ENCODE measurements at regions of chr17 and their contacts with region 1.

Region 1: DNA sequence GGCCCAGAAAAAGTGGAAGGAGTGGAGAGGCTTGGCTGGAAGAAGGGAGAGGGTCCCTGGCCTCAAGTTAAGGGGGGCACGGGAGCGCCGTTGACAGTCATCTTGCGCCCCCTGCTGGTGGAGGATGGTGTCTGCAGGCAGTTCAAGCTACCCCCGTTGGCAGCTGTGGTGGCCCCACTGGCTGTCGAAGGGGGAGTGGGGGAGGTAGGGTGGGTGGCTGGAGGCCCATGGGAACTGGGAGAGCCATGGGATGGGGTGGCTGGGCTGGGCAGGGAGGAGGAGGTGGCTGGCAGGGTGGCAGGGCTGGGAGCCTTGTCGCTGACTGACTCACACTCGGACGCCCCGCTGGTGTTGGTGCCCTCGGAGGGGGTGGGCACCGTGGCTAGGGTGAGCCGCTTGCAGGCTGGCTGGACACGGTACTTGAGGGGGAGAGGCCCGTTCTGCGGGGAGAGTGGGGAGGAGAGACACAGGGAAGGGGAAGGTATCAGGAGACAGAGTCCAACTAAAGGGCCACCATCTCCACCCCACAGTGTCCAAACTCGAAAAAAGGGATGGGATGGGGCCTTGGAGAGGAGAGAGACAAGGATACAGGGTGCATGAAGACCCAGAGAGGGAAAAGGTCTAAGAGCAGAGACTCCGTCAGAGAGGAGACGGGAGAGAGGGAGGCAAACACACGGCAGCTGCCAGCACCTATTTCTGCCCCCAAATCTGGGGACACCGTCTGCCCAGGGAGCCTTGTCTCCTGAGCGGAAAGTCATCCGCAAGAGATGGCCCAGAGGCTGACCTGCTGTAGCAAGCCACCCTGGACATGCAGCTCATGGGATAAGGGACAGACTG is 5.2 kb downstream of the CISD3 start:
- DNase-seq: peak; percentile 93
- H3K4me3 Mint-ChIP-seq: no peak overlapping the region
- H3K27ac Mint-ChIP-seq: peak overlapping the region; percentile 15
- H3K4me1 Mint-ChIP-seq: peaks cover 44% of the 10 kb centered on the region
- H3K27me3 Mint-ChIP-seq: no peaks in the 10 kb centered on the region
- CTCF ChIP-seq: peak; percentile 100

Region 2: DNA sequence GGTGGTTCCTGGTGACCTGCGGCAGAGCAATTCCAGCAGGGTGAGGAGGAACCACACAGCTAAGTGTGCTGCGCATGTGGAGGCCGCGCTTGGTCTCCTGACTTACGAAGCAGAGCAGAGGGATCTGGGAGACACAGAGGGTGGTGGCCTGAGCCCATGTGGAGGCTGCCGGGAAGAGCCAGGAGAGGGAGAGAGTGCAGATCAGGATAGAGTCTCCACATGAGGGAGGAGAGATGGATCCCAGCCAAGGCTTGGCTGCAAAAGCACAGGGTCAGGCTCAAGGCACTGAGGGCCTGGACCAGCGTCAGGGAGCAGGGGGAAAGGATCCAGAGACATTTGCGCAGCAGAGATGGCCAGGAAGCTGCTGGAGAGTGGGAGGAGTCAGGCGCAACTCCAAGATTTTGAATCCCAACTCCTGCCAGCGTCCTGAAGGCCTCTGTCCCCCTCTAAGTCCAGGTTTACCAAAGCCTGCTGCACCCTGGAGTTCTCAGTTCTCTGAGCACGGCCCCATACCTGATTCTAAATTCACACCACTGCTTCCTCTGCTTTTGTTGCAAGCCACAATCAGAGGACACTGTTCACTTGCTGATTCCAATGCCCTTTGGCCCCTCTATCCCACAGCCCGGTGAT is 41.6 kb before region 1 on chr17:
- CTCF ChIA-PET with region 1: interaction called, 11 read pairs
- intact Hi-C with region 1: no loop called
- DNase-seq: no peak
- H3K4me3 Mint-ChIP-seq: no peak overlapping the region
- H3K27ac Mint-ChIP-seq: no peak overlapping the region
- H3K4me1 Mint-ChIP-seq: peaks cover 5% of the 10 kb centered on the region
- H3K27me3 Mint-ChIP-seq: peaks cover 73% of the 10 kb centered on the region
- CTCF ChIP-seq: no peak

Region 3: DNA sequence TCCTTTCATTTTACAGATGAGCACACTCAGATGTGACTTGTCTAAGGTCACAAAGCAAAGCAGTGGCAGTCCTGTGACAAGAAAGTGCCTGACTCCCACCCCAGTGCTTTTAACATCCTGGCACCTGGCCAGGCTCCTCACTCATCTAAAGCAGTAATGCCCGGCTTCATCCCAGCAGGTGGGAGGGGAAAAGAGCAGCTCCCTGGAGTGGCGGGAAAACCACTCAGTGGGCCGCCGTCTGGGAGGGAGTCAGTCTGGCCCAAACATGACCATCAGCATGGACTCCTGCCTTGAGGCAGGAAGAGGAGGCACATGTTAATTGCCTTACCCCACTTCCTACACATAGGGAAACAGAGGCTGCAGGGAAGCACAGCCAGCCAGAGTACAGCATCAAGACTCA is 10.2 kb after region 1 on chr17:
- CTCF ChIA-PET with region 1: interaction called, 17 read pairs
- intact Hi-C with region 1: no loop called
- DNase-seq: no peak
- H3K4me3 Mint-ChIP-seq: peak overlapping the region; percentile 78
- H3K27ac Mint-ChIP-seq: peak overlapping the region; percentile 76
- H3K4me1 Mint-ChIP-seq: peaks cover 56% of the 10 kb centered on the region
- H3K27me3 Mint-ChIP-seq: no peaks in the 10 kb centered on the region
- CTCF ChIP-seq: no peak

Measured in Calu3 (cell line).